Activated T-helper 2 cell treated with anti-CD3 and anti-CD28 coated beads, Interferon-gamma antibody, Interleukin-2, Interleukin-4, amounts not matched to agents 10 μg/mL and 5 μg/mL and 100 μg/mL, durations not matched to agents 14 hours and 24 hours and 36 hours (primary cell): ENCODE measurements at regions of chr11 and their contacts with region 1.

Region 1: DNA sequence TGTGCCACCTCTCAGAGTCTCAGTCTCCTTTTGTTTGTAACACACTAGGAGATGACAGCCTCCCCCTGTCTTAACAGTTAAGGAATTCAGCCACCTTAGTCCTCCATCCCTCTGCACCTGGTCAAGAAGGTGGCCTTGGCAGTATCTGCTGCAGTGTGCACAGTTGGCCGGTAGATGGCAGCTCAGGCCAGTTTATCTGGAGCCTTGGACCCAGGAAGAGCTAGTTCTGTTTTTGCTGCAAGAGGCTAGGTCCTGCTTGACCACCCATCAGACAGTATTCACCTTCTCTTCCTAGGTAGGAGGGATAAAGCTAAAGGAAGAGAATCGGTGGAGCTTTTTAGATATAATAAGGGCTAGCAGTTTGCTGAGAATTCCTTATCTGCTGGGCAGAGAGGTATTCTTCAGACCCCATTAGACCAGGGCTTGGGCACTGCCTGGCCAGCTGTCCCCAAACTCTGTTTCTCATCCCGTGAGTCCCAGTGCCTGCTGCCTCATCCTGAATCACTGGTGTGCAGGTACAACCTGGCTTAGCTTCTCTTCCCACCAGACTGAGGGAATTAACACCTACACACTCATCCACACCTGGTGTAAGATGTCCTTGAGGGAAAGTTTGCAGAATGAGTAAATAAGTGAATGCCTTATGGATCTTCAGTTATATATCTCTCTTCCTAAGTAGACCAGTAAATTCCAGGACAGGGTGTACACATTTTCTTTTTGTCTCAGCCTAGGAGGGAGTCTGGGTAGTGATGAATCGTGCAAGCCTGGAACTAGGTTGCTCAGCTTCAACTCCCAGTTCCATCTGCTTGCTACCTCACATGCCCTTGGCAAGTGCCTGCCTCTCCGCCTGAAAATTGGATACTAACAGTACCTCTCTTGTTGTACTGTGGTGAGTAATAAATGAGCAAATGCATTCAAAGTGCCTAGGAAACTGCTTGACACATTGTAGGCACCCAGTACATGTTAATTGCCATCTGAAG is 70.8 kb upstream of the NARS2 start:
- DNase-seq: peak; percentile 52
- H3K4me3 Mint-ChIP-seq: no peak overlapping the region
- H3K27ac Mint-ChIP-seq: no peak overlapping the region
- H3K4me1 Mint-ChIP-seq: peaks cover 52% of the 10 kb centered on the region
- H3K27me3 Mint-ChIP-seq: no peaks in the 10 kb centered on the region

Region 2: DNA sequence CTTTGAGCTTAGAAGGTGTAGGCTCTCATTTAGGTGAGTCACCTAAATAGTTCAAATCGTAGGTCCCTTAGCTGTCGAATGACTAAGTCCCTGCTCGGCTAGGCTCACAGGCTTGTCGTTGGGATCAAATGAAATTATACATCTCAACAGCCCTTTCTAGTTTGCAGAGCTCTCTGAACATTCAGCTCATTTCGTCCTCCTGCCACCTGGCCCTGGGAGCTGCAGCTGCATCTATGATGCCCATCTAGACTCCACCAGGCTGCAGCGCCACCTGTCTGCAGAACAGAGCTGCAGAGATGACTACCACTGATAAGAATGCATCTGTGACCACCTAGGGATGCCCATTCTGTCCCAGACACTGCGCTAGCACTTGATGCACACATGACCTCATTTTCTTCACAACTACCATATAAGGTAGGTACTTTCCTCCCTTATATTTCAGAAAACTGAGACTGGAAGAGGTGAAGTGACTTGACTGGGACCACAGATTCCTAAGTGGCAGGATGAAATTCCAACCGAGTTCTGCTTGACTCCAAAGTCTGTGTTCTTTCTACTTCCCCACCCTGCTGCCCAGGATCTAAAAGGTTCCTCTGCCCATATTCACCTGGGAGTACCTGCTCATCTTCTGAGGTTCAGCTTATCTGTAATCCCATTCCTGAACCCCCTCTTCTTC is 70.3 kb after region 1 on chr11:
- intact Hi-C with region 1: loop called (anchors 1 kb)
- DNase-seq: peak; percentile 18
- H3K4me3 Mint-ChIP-seq: no peak overlapping the region
- H3K27ac Mint-ChIP-seq: no peak overlapping the region
- H3K4me1 Mint-ChIP-seq: no peaks in the 10 kb centered on the region
- H3K27me3 Mint-ChIP-seq: peaks cover 11% of the 10 kb centered on the region

Region 3: DNA sequence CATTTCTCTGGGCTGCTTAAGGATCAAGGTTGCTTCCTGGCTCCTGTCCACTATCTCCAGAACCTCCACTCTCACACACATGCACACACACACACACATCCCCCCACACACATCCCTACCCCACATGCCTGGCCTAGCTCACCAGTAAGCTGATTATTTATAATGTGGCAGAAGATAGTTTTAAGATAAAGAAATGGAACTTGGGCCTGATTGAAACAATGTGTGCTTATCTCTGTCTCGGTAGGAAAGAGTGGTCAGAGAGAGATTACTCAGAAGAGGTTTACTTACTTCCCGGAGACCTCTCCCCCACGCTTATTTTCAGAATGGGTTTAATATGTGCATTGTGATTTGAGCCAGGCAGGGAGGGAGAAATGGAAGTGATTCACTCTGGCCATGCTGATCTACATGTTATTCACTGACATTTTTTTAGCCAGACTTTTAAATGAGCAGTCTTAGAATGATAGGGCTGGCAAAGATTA is 372.9 kb after region 1 on chr11:
- intact Hi-C with region 1: loop called (anchors 1 kb)
- DNase-seq: no peak
- H3K4me3 Mint-ChIP-seq: no peak overlapping the region
- H3K27ac Mint-ChIP-seq: no peak overlapping the region
- H3K4me1 Mint-ChIP-seq: peaks cover 10% of the 10 kb centered on the region
- H3K27me3 Mint-ChIP-seq: peaks cover 38% of the 10 kb centered on the region

Region 4: DNA sequence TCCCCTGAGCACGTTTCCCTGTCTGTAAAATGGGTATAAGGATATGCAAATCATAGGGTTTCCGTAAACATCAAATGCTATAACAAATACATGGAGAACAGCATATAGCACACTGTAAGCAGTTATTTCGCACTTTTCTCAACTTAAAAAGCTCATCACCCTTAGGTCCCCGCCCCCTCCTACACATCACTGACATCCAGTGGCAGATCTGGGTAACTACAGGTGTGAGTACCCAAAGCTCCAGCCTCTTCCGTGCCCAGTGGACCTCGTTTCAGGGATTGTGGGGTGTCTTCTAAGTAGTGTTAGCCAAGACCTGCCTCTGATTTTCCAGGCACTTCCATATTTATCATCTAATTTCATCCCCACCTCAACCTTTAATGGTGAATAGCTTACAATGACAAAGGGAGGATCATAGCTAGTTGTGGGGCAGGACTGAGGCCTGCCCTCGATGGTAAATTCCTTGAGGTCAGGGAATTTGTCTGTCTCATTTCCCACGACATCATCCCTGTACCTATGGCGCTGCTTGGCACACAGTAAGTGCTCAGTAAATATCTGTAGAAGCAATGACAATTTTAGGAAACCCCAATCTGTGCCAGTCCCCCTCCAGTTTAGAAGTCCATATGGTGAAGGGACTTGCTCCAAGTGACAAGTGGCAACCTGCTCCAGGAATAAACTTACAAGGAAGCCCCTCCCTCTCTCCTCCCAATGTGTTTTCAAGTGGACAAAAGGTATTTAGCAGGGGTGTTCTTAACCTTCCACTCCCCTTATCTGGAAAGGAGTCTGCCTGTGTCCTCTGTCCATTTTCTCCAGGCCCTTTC is 454.8 kb after region 1 on chr11:
- intact Hi-C with region 1: loop called (anchors 1 kb)
- DNase-seq: peak; percentile 13
- H3K4me3 Mint-ChIP-seq: no peak overlapping the region
- H3K27ac Mint-ChIP-seq: no peak overlapping the region
- H3K4me1 Mint-ChIP-seq: no peaks in the 10 kb centered on the region
- H3K27me3 Mint-ChIP-seq: peaks cover 8% of the 10 kb centered on the region